Left ventricle myocardium inferior (tissue), 1 donor: ENCODE measurements at regions of chr3 and their contacts with region 1.

Region 1: DNA sequence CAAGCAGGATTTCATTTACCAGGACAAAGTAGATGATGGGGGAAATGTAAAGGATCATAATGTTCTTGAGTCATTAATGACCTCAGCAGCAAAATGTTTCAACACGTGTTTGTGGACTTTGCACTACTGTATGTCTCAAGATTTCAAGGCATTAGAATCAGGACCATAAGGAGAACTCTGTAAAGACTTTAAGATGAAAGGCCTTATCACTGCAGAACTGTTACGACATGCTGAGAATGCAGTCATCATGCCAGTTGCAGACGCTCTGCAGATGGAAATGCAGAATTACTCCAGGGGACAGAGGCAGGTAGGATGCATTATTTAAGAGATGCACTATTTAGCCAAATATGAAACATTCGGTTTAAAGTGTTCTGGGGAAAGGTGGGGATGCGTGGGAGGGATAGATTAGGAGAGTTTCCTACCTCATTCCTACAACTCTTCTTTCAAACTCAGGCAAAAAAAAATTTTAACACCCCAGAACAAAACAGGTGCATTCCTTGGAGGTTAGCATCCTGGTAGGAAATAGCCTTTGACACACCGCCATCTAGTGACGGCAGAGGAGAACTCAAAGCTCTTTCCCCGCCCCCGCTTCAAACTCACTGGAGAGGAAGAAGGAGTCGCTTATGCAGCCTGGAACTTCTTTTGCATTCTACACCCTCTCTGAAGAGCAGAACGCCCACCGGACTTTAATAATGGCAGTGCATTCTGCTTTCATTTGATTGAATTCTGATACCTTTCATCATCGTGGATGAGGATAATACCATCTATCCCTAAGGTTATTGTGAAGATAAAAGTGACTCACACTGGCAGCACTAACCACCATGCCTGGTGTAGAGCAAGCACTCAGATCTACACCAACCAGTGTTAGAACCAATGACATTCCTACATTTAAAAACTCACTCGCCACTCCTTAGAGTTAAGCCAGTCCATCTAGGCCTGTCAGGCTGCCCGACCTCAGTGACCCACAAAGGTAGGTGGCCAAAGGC is 43.1 kb upstream of the TOPAZ1 start:
- DNase-seq: peak; percentile 20
- H3K4me3 ChIP-seq: no peak overlapping the region
- H3K27ac ChIP-seq: no peak overlapping the region
- H3K4me1 ChIP-seq: no peaks in the 10 kb centered on the region
- H3K27me3 ChIP-seq: peaks cover 53% of the 10 kb centered on the region
- CTCF ChIP-seq: peak; percentile 87

Region 2: DNA sequence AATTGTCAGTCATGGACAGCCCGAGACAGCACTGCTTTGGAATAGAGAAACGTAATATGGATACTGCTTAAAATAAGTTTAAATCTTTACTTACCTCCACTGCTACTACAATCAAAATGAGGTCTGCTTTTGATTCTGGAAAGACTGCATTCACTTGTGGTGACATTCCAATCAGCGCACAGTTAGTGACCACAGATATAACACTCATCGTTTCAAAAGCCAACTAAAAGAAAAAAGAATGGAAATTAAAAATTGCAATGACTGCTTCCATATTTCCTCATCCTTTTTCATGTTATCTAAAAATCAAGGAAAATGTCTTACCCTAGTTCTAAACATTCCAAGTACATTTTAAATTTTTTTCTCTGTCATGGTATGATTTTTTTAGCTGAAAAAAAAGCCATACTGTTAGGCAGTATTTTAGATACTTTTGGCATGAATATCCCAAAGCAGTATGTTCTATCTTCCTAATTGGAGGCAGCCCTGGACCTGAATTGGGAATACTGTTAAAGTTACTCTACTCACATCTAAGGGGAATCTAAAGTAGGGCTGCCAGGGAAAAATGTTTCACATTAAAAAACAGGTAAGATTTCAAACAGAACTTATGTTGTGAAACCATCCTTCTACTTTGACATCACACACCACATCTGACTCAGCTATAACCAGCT is 648.8 kb before region 1 on chr3:
- intact Hi-C with region 1: loop called (anchors 5 kb)
- DNase-seq: no peak
- H3K4me3 ChIP-seq: no peak overlapping the region
- H3K27ac ChIP-seq: no peak overlapping the region
- H3K4me1 ChIP-seq: no peaks in the 10 kb centered on the region
- H3K27me3 ChIP-seq: no peaks in the 10 kb centered on the region
- CTCF ChIP-seq: no peak